Activated CD4-positive, alpha-beta memory T cell treated with anti-CD3 and anti-CD28 coated beads for 36 hours (primary cell): ENCODE measurements at regions of chrX and their contacts with region 1.

Region 1: GRCh38 chrX:24498975-24499374 is 33.9 kb downstream of the PDK3 start:
- DNase-seq: no peak
- H3K4me3 Mint-ChIP-seq: no peak overlapping the region
- H3K27ac Mint-ChIP-seq: no peak overlapping the region
- H3K4me1 Mint-ChIP-seq: peaks cover 24% of the 10 kb centered on the region
- H3K27me3 Mint-ChIP-seq: no peaks in the 10 kb centered on the region

Region 2: DNA sequence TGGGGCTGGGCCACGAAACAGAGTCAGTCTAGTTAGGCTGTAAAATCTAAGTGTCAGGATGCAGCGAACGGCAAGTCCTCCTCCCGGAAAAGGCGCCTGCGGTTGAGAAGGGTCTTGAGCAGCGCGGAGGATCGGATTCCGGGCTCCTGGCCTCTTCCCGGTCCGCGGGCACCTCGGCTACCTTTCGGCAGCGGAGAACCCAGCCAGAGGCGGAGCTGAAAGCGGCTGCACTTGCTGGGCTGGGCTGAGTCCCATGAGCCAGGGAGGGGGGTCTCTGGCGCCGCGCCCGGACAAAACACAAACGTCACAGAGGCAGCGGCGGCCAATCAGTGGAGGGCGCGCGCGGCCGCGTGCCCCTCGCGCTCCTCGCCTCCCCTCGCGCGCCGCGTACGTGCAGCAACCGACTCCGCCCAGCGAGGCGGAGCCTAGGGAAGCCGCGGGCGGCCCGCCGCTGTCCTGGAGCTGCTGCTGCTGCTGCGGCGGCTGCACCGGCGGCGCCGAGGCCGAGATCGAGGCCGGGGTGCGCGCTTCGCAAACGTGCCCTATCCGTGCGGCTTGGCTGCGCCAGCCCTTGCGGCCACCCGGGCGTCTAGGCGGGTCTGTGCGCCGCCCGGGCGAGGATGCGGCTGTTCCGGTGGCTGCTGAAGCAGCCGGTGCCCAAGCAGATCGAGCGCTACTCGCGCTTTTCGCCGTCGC is 34.0 kb before region 1 on chrX and contains the start of gene PDK3:
- CTCF ChIA-PET with region 1: interaction called, 19 read pairs
- POLR2A ChIA-PET with region 1: no interaction called
- intact Hi-C with region 1: loop called (anchors 1 kb)
- DNase-seq: peak; percentile 89
- H3K4me3 Mint-ChIP-seq: peak within 1 kb of the TSS; percentile 75
- H3K27ac Mint-ChIP-seq: peak within 1 kb of the TSS; percentile 85
- H3K4me1 Mint-ChIP-seq: peaks cover 35% of the 10 kb centered on the region
- H3K27me3 Mint-ChIP-seq: no peaks in the 10 kb centered on the region
- total RNA-seq, gene PDK3: 39.8 to 41.3 TPM